ENCODE measurements at regions of chr5 and their contacts with region 1.

Region 1: GRCh38 chr5:137778772-137779564 is 24.8 kb upstream of the HNRNPA0 start:
- DNase-seq: peak; percentile 57
- ATAC-seq: no peak
- H3K4me3 ChIP-seq: no peak overlapping the region
- H3K4me3 Mint-ChIP-seq: no peak overlapping the region
- H3K27ac ChIP-seq: no peak overlapping the region
- H3K27ac Mint-ChIP-seq: no peak overlapping the region
- H3K4me1 ChIP-seq: no peaks in the 10 kb centered on the region
- H3K4me1 Mint-ChIP-seq: peaks cover 1% of the 10 kb centered on the region
- H3K27me3 ChIP-seq: no peaks in the 10 kb centered on the region
- H3K27me3 Mint-ChIP-seq: no peaks in the 10 kb centered on the region
- CTCF ChIP-seq: peak; percentile 91

Region 2: GRCh38 chr5:137743031-137743640 is 35.8 kb before region 1 on chr5:
- CTCF ChIA-PET with region 1: interaction called, 14 read pairs
- POLR2A ChIA-PET with region 1: no interaction called
- intact Hi-C with region 1: no loop called
- DNase-seq: peak; percentile 73
- ATAC-seq: peak; percentile 71
- H3K4me3 ChIP-seq: no peak overlapping the region
- H3K4me3 Mint-ChIP-seq: no peak overlapping the region
- H3K27ac ChIP-seq: no peak overlapping the region
- H3K27ac Mint-ChIP-seq: no peak overlapping the region
- H3K4me1 ChIP-seq: no peaks in the 10 kb centered on the region
- H3K4me1 Mint-ChIP-seq: peaks cover 2% of the 10 kb centered on the region
- H3K27me3 ChIP-seq: no peaks in the 10 kb centered on the region
- H3K27me3 Mint-ChIP-seq: no peaks in the 10 kb centered on the region
- CTCF ChIP-seq: peak; percentile 81

Region 3: GRCh38 chr5:137833463-137833862 is 54.5 kb after region 1 on chr5:
- CTCF ChIA-PET with region 1: interaction called, 12 read pairs
- POLR2A ChIA-PET with region 1: no interaction called
- intact Hi-C with region 1: no loop called
- DNase-seq: no peak
- ATAC-seq: no peak
- H3K4me3 ChIP-seq: no peak overlapping the region
- H3K4me3 Mint-ChIP-seq: no peak overlapping the region
- H3K27ac ChIP-seq: no peak overlapping the region
- H3K27ac Mint-ChIP-seq: no peak overlapping the region
- H3K4me1 ChIP-seq: no peaks in the 10 kb centered on the region
- H3K4me1 Mint-ChIP-seq: no peaks in the 10 kb centered on the region
- H3K27me3 ChIP-seq: no peaks in the 10 kb centered on the region
- H3K27me3 Mint-ChIP-seq: no peaks in the 10 kb centered on the region
- CTCF ChIP-seq: no peak

Region 4: DNA sequence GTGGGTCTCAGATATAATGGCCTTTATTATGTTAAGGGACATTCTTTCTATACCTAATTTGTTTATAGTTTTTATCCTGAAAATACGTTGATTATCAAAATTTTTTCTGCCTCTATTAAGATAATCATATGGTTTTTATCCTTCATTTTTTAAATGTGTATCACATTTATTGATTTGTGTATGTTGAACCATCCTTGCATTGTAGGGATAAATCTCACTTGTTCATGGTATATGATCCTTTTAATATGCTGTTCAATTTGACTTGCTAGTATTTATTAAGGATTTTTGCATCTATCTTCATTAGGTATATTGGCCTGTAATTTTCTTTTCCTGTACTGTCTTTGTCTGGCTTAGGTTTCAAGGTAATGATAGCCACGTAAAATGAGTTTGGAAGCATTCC is 135.8 kb after region 1 on chr5:
- CTCF ChIA-PET with region 1: no interaction called
- POLR2A ChIA-PET with region 1: no interaction called
- intact Hi-C with region 1: no loop called
- DNase-seq: no peak
- ATAC-seq: no peak
- H3K4me3 ChIP-seq: no peak overlapping the region
- H3K4me3 Mint-ChIP-seq: no peak overlapping the region
- H3K27ac ChIP-seq: no peak overlapping the region
- H3K27ac Mint-ChIP-seq: no peak overlapping the region
- H3K4me1 ChIP-seq: no peaks in the 10 kb centered on the region
- H3K4me1 Mint-ChIP-seq: no peaks in the 10 kb centered on the region
- H3K27me3 ChIP-seq: no peaks in the 10 kb centered on the region
- H3K27me3 Mint-ChIP-seq: no peaks in the 10 kb centered on the region
- CTCF ChIP-seq: no peak

Region 5: GRCh38 chr5:137933491-137933911 is 154.5 kb after region 1 on chr5:
- CTCF ChIA-PET with region 1: interaction called, 13 read pairs
- POLR2A ChIA-PET with region 1: no interaction called
- intact Hi-C with region 1: loop called (anchors 10 kb)
- DNase-seq: no peak
- ATAC-seq: no peak
- H3K4me3 ChIP-seq: no peak overlapping the region
- H3K4me3 Mint-ChIP-seq: no peak overlapping the region
- H3K27ac ChIP-seq: peak overlapping the region in 1 of 2 donors; percentile 1
- H3K27ac Mint-ChIP-seq: no peak overlapping the region
- H3K4me1 ChIP-seq: peaks cover 0 to 5% of the 10 kb centered on the region in 2 donors
- H3K4me1 Mint-ChIP-seq: peaks cover 16% of the 10 kb centered on the region
- H3K27me3 ChIP-seq: no peaks in the 10 kb centered on the region
- H3K27me3 Mint-ChIP-seq: no peaks in the 10 kb centered on the region
- CTCF ChIP-seq: no peak

Region 6: GRCh38 chr5:138024117-138024516 is 245.1 kb after region 1 on chr5:
- CTCF ChIA-PET with region 1: interaction called, 11 read pairs
- POLR2A ChIA-PET with region 1: no interaction called
- intact Hi-C with region 1: no loop called
- DNase-seq: no peak
- ATAC-seq: no peak
- H3K4me3 ChIP-seq: no peak overlapping the region
- H3K4me3 Mint-ChIP-seq: no peak overlapping the region
- H3K27ac ChIP-seq: no peak overlapping the region
- H3K27ac Mint-ChIP-seq: no peak overlapping the region
- H3K4me1 ChIP-seq: peaks cover 46 to 62% of the 10 kb centered on the region in 2 donors
- H3K4me1 Mint-ChIP-seq: peaks cover 74% of the 10 kb centered on the region
- H3K27me3 ChIP-seq: no peaks in the 10 kb centered on the region
- H3K27me3 Mint-ChIP-seq: no peaks in the 10 kb centered on the region
- CTCF ChIP-seq: no peak

Region 7: DNA sequence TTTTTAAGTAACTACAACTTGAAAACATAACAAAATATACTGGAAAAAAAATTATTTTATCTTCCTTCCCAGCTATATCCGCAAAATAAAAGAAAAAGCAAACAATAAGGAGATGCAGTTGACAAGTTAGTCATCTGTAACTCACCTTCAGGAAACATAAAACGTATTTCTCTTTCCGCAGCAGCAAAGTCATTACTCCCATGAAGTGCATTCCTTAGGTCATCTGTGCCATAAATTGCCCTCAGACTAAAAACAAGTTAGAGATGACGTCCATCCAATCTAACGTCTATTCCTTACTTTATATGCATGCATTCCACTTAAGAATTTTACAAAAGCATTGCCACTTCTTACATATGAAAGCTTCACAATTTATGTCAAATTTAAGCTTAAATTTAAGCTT is 349.4 kb after region 1 on chr5:
- CTCF ChIA-PET with region 1: interaction called, 46 read pairs
- POLR2A ChIA-PET with region 1: interaction called, 3 read pairs
- intact Hi-C with region 1: loop called (anchors 1 kb)
- DNase-seq: no peak
- ATAC-seq: no peak
- H3K4me3 ChIP-seq: no peak overlapping the region
- H3K4me3 Mint-ChIP-seq: no peak overlapping the region
- H3K27ac ChIP-seq: no peak overlapping the region
- H3K27ac Mint-ChIP-seq: no peak overlapping the region
- H3K4me1 ChIP-seq: peaks cover 0 to 4% of the 10 kb centered on the region in 2 donors
- H3K4me1 Mint-ChIP-seq: peaks cover 1% of the 10 kb centered on the region
- H3K27me3 ChIP-seq: peaks cover 0 to 7% (median 0%) of the 10 kb centered on the region in 4 experiments
- H3K27me3 Mint-ChIP-seq: peaks cover 17% of the 10 kb centered on the region
- CTCF ChIP-seq: no peak

Region 8: GRCh38 chr5:139075066-139076050 is 1296.4 kb after region 1 on chr5:
- CTCF ChIA-PET with region 1: no interaction called
- POLR2A ChIA-PET with region 1: no interaction called
- intact Hi-C with region 1: no loop called
- DNase-seq: no peak
- ATAC-seq: no peak
- H3K4me3 ChIP-seq: no peak overlapping the region
- H3K4me3 Mint-ChIP-seq: no peak overlapping the region
- H3K27ac ChIP-seq: no peak overlapping the region
- H3K27ac Mint-ChIP-seq: no peak overlapping the region
- H3K4me1 ChIP-seq: no peaks in the 10 kb centered on the region
- H3K4me1 Mint-ChIP-seq: peaks cover 3% of the 10 kb centered on the region
- H3K27me3 ChIP-seq: no peaks in the 10 kb centered on the region
- H3K27me3 Mint-ChIP-seq: no peaks in the 10 kb centered on the region
- CTCF ChIP-seq: no peak

Measured in B cell (primary cell).